GM12878 (cell line): ENCODE measurements at regions of chr18 and their contacts with region 1.

Region 1: GRCh38 chr18:42053188-42053781 is 98.3 kb downstream of the PIK3C3 start:
- DNase-seq: peak; percentile 4
- ATAC-seq: peak; percentile 95
- H3K4me3 ChIP-seq: no peak overlapping the region
- H3K27ac ChIP-seq: no peak overlapping the region
- H3K4me1 ChIP-seq: no peaks in the 10 kb centered on the region
- H3K27me3 ChIP-seq: no peaks in the 10 kb centered on the region
- CTCF ChIP-seq: peak; percentile 68 to 80 (median 76)
- EP300 ChIP-seq: no peak
- POLR2A ChIP-seq: no peak
- RAD21 ChIP-seq: peak; percentile 60

Region 2: DNA sequence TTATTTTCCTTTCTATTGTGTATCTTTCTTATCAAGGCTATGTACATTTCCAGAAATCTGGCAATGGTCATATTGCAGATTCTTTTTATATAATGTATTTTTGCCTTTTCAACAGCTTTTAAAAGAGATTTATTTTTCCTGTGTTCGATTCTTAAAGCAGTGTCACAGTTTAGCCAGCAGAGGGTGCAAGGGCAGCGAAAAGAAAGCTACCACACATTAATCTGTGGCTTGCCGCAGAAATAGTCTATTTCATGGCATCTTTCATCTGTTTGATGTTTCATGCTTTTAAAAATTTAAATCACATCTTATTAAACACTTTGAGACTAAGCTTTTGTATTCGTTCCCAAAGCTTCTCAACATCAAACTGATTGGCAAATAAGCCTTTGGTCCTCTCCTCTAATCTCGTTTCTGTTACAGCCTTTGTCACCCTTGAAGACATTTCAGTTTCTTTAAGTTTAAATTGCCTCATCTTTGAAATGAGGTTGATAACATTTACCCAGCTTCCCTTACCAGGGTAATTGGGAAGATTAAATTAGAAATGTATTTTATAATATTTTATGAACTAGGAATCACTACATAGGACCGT is 24.9 kb before region 1 on chr18:
- CTCF ChIA-PET with region 1: interaction called, 98 read pairs
- POLR2A ChIA-PET with region 1: no interaction called
- RAD21 ChIA-PET with region 1: interaction called, 4 read pairs
- SMC1A ChIA-PET with region 1: interaction called, 15 read pairs
- in situ Hi-C with region 1: no loop called
- intact Hi-C with region 1: no loop called
- DNase-seq: no peak
- ATAC-seq: 0 out of 3 replicates have a peak, but pooled peaks have one; percentile 22
- H3K4me3 ChIP-seq: no peak overlapping the region
- H3K27ac ChIP-seq: no peak overlapping the region
- H3K4me1 ChIP-seq: peaks cover 33% of the 10 kb centered on the region
- H3K27me3 ChIP-seq: no peaks in the 10 kb centered on the region
- CTCF ChIP-seq: peak; percentile 63 to 77 (median 74)
- EP300 ChIP-seq: no peak
- POLR2A ChIP-seq: no peak
- RAD21 ChIP-seq: peak; percentile 40; the same call in 1 of the 2 replicates

Region 3: DNA sequence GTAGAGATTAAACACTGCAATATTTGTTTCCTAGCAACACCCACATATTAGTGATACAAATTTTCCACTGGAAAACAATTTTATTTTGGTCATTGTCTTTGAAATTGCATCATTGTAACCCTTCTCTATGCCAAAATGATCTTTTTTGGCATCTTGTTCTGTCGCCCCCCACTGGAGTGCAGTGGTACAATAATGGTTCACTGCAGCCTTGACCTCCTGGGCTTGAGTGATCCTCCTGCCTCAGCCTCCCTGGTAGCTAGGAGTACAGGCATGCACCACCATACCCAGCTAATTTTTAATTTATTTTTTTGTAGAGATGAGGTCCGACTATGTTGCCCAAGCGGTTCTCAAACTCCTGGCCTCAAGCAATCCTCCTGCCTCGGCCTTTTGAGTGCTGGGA is 19.1 kb after region 1 on chr18:
- CTCF ChIA-PET with region 1: interaction called, 104 read pairs
- POLR2A ChIA-PET with region 1: no interaction called
- RAD21 ChIA-PET with region 1: interaction called, 6 read pairs
- SMC1A ChIA-PET with region 1: interaction called, 8 read pairs
- in situ Hi-C with region 1: no loop called
- intact Hi-C with region 1: no loop called
- DNase-seq: no peak
- ATAC-seq: no peak
- H3K4me3 ChIP-seq: no peak overlapping the region
- H3K27ac ChIP-seq: no peak overlapping the region
- H3K4me1 ChIP-seq: no peaks in the 10 kb centered on the region
- H3K27me3 ChIP-seq: no peaks in the 10 kb centered on the region
- CTCF ChIP-seq: 0 out of 6 replicates have a peak, but pooled peaks of 2 of the 3 experiments have one; percentile 10 to 14
- EP300 ChIP-seq: no peak
- POLR2A ChIP-seq: no peak
- RAD21 ChIP-seq: no peak

Region 4: GRCh38 chr18:42107691-42108450 is 54.6 kb after region 1 on chr18:
- CTCF ChIA-PET with region 1: interaction called, 80 read pairs
- POLR2A ChIA-PET with region 1: no interaction called
- RAD21 ChIA-PET with region 1: interaction called, 40 read pairs
- SMC1A ChIA-PET with region 1: interaction called, 46 read pairs
- in situ Hi-C with region 1: no loop called
- intact Hi-C with region 1: loop called (anchors 1 kb)
- DNase-seq: no peak
- ATAC-seq: no peak
- H3K4me3 ChIP-seq: no peak overlapping the region
- H3K27ac ChIP-seq: no peak overlapping the region
- H3K4me1 ChIP-seq: no peaks in the 10 kb centered on the region
- H3K27me3 ChIP-seq: no peaks in the 10 kb centered on the region
- CTCF ChIP-seq: no peak
- EP300 ChIP-seq: no peak
- POLR2A ChIP-seq: no peak
- RAD21 ChIP-seq: no peak

Region 5: GRCh38 chr18:42274488-42275137 is 221.3 kb after region 1 on chr18:
- CTCF ChIA-PET with region 1: interaction called, 37 read pairs
- POLR2A ChIA-PET with region 1: no interaction called
- RAD21 ChIA-PET with region 1: interaction called, 9 read pairs
- SMC1A ChIA-PET with region 1: interaction called, 31 read pairs
- in situ Hi-C with region 1: no loop called
- intact Hi-C with region 1: loop called (anchors 5 kb)
- DNase-seq: no peak
- ATAC-seq: peak; percentile 92
- H3K4me3 ChIP-seq: no peak overlapping the region
- H3K27ac ChIP-seq: no peak overlapping the region
- H3K4me1 ChIP-seq: no peaks in the 10 kb centered on the region
- H3K27me3 ChIP-seq: no peaks in the 10 kb centered on the region
- CTCF ChIP-seq: peak; percentile 19 to 47 (median 24); a peak in 3 of 6 replicates
- EP300 ChIP-seq: no peak
- POLR2A ChIP-seq: no peak
- RAD21 ChIP-seq: peak; percentile 36; the same call in 1 of the 2 replicates

Region 6: DNA sequence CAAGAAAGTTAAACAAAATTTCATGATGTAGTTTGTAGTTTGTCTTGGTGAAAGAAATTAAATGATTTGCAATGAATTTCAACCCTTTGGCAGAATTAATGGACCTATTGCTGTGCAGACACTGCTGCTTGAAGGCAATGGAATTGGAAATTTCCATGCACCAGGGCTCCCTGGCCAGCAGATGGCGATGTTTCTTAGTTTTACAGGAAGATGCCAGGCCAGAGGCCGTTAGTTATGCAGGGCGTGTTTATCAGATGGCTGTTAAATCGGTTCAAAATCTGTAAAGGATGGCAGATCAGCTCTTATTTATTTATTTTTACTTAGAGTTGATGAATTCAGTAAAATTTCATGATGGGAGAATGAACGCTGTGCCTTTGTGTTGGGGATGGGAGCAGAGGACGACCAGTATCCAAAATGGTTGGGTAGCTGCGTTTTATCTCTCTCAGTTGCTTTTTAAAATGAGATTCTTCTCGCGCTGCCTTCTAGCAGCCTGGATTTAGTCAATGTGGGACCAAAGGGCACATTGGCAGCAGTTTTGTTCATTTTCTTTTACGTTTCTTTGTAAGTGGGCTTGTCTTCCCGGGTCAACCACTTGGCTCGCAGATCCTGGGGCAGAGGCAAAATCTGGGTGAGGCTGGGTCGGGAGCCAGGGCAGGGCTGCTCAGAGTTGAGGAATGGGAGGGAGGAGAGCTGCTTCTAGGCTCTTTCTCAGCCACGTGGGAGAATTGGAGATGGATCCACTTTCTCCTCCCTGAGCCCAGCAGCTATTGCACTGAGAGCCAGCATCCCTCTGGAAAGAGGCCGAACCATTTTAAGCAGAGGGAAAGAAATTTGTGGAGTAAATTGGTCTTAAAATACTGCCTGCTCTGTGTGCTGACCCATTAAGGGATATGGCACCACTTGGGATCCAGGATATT is 245.7 kb after region 1 on chr18:
- CTCF ChIA-PET with region 1: interaction called, 24 read pairs
- POLR2A ChIA-PET with region 1: no interaction called
- RAD21 ChIA-PET with region 1: interaction called, 7 read pairs
- SMC1A ChIA-PET with region 1: interaction called, 13 read pairs
- in situ Hi-C with region 1: no loop called
- intact Hi-C with region 1: no loop called
- DNase-seq: no peak
- ATAC-seq: peak; percentile 95
- H3K4me3 ChIP-seq: no peak overlapping the region
- H3K27ac ChIP-seq: no peak overlapping the region
- H3K4me1 ChIP-seq: no peaks in the 10 kb centered on the region
- H3K27me3 ChIP-seq: no peaks in the 10 kb centered on the region
- CTCF ChIP-seq: peak; percentile 85 to 89 (median 85)
- EP300 ChIP-seq: no peak
- POLR2A ChIP-seq: no peak
- RAD21 ChIP-seq: peak; percentile 77

Region 7: GRCh38 chr18:43563780-43564179 is 1510.5 kb after region 1 on chr18:
- CTCF ChIA-PET with region 1: no interaction called
- POLR2A ChIA-PET with region 1: no interaction called
- RAD21 ChIA-PET with region 1: no interaction called
- SMC1A ChIA-PET with region 1: interaction called, 3 read pairs
- in situ Hi-C with region 1: no loop called
- intact Hi-C with region 1: loop called (anchors 10 kb)
- DNase-seq: no peak
- ATAC-seq: peak; percentile 69
- H3K4me3 ChIP-seq: no peak overlapping the region
- H3K27ac ChIP-seq: no peak overlapping the region
- H3K4me1 ChIP-seq: no peaks in the 10 kb centered on the region
- H3K27me3 ChIP-seq: no peaks in the 10 kb centered on the region
- CTCF ChIP-seq: peak in 2 of 3 experiments; percentile 19 to 44; a peak in 3 of 6 replicates
- EP300 ChIP-seq: no peak
- POLR2A ChIP-seq: no peak
- RAD21 ChIP-seq: peak; percentile 57